ENCODE measurements at regions of chr20 and their contacts with region 1.

Region 1: DNA sequence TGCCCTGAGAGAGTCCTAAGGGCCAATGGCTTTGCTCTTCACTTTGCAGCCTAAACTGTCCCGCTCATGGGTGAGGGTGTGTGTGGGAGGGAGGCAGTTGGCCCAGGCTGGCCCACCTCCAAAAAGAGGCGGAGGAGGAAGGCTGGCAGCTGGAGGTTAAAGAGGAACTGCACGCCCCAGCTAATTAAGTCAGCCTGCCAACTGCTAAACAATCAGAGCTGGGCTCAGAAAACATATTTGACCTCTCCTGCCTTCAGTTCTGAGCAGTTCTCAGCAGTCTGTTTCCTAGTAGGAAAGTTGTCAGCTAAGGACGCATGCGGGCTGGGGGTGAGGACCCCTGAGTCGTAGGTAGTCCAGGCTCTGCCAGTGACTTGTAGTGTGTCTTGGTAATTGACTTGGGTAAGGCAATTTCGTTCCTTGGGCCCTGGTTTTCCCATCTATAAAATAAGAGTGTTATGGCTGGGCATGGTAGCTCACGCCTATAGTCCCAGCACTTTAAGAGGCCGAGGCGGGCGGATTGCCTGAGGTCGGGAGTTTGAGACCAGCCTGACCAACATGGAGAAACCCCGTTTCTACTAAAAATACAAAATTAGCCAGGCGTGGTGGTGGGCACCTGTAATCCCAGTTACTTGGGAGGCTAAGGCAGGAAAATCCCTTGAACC is 17.0 kb downstream of the GSS start:
- DNase-seq: peak; percentile 60 to 80
- ATAC-seq: peak; percentile 26 to 41 (median 35)
- H3K4me3 ChIP-seq: no peak overlapping the region
- H3K27ac ChIP-seq: peak overlapping the region; percentile 76
- H3K4me1 ChIP-seq: peaks cover 41% of the 10 kb centered on the region
- H3K27me3 ChIP-seq: no peaks in the 10 kb centered on the region
- CTCF ChIP-seq: no peak

Region 2: DNA sequence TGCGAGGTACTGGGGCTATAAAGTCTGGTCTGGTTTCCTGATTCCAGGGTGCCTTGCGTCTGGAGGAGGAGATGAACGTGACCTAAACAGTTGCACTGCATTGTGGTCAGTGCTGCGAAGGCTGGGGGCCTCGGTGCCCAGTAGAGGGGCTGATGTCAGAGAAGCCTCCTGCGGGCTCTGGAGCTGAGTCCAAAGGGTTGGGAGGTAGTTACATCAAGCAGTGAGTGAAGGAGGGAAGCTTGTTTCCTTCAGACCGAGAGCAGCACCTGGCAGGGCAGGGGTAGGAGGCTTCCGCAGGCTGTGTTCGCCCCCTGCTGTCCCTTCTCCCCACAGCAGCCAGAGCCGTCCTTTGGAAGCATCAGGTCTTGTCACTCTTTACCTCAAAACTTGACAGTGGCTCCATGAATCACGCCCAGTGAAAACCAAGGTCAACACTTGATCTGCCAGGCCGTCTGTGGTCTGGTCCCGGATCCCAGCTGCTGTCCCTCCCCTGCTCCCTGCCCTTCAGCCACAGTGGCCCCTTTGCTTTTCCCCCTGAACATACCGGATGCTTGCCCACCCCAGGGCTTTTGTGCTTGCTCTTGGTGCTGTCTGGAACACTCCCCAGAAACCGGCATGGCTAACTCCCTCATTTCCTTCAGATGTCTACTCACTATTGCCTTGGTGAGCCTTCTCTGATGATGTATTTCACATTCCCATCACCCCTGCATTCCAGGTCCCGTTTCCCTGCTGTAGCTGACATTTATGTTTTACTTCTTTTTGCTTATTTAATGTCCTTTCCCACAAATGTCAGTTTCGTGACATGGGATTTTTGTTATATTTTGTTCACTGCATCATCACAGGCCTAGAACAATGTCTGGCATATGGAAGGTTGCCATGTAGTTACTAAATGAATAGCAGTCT is 415.4 kb before region 1 on chr20:
- intact Hi-C with region 1: no loop called
- DNase-seq: peak; percentile 60 to 79
- ATAC-seq: peak; percentile 76 to 83 (median 82)
- H3K4me3 ChIP-seq: no peak overlapping the region
- H3K27ac ChIP-seq: peak overlapping the region; percentile 79
- H3K4me1 ChIP-seq: peaks cover 56% of the 10 kb centered on the region
- H3K27me3 ChIP-seq: no peaks in the 10 kb centered on the region
- CTCF ChIP-seq: peak; percentile 72

Region 3: GRCh38 chr20:34891166-34892062 is 47.2 kb before region 1 on chr20:
- intact Hi-C with region 1: loop called in 1 of 2 experiments (anchors 5 kb)
- DNase-seq: no peak
- ATAC-seq: peak; percentile 22 to 57 (median 39)
- H3K4me3 ChIP-seq: no peak overlapping the region
- H3K27ac ChIP-seq: peak overlapping the region; percentile 69
- H3K4me1 ChIP-seq: peaks cover 56% of the 10 kb centered on the region
- H3K27me3 ChIP-seq: no peaks in the 10 kb centered on the region
- CTCF ChIP-seq: no peak